Naive thymus-derived CD4-positive, alpha-beta T cell (primary cell): ENCODE measurements at regions of chr1 and their contacts with region 1.

Region 1: GRCh38 chr1:8873506-8874229 is 4.8 kb downstream of the ENO1 start:
- DNase-seq: peak in 2 of 9 donors; percentile 49 to 74
- ATAC-seq: peak; percentile 37
- H3K4me3 ChIP-seq: no peak overlapping the region
- H3K4me3 Mint-ChIP-seq: peak overlapping the region in 8 of 10 donors; percentile 9 to 99 (median 33)
- H3K27ac ChIP-seq: peak overlapping the region; percentile 49
- H3K27ac Mint-ChIP-seq: peak overlapping the region in 8 of 9 donors; percentile 9 to 85 (median 75)
- H3K4me1 ChIP-seq: peaks cover 39 to 41% of the 10 kb centered on the region in 2 donors
- H3K4me1 Mint-ChIP-seq: peaks cover 30 to 74% (median 60%) of the 10 kb centered on the region in 7 donors
- H3K27me3 ChIP-seq: no peaks in the 10 kb centered on the region
- H3K27me3 Mint-ChIP-seq: peaks cover 0 to 3% (median 0%) of the 10 kb centered on the region in 5 donors

Region 2: GRCh38 chr1:8858888-8859706 is 14.6 kb before region 1 on chr1:
- CTCF ChIA-PET with region 1: interaction called, 3 read pairs
- POLR2A ChIA-PET with region 1: interaction called, 55 read pairs
- intact Hi-C with region 1: loop called in 1 of 2 experiments (anchors 2 kb)
- DNase-seq: peak in 7 of 9 donors; percentile 52 to 73 (median 61)
- ATAC-seq: peak; percentile 83
- H3K4me3 ChIP-seq: no peak overlapping the region
- H3K4me3 Mint-ChIP-seq: peak overlapping the region in 1 of 10 donors; percentile 61
- H3K27ac ChIP-seq: no peak overlapping the region
- H3K27ac Mint-ChIP-seq: peak overlapping the region; percentile 45 to 89 (median 78)
- H3K4me1 ChIP-seq: no peaks in the 10 kb centered on the region
- H3K4me1 Mint-ChIP-seq: peaks cover 0 to 48% (median 10%) of the 10 kb centered on the region in 7 donors
- H3K27me3 ChIP-seq: no peaks in the 10 kb centered on the region
- H3K27me3 Mint-ChIP-seq: no peaks in the 10 kb centered on the region